CD4-positive, alpha-beta T cell (primary cell): ENCODE measurements at regions of chr4 and their contacts with region 1.

Region 1: GRCh38 chr4:129377131-129377845 is 281.3 kb downstream of the C4orf33 start:
- DNase-seq: no peak
- ATAC-seq: no peak
- H3K4me3 ChIP-seq: no peak overlapping the region
- H3K4me3 Mint-ChIP-seq: no peak overlapping the region
- H3K27ac ChIP-seq: no peak overlapping the region
- H3K27ac Mint-ChIP-seq: no peak overlapping the region
- H3K4me1 ChIP-seq: no peaks in the 10 kb centered on the region
- H3K4me1 Mint-ChIP-seq: no peaks in the 10 kb centered on the region
- H3K27me3 ChIP-seq: no peaks in the 10 kb centered on the region
- H3K27me3 Mint-ChIP-seq: peaks cover 5% of the 10 kb centered on the region
- CTCF ChIP-seq: no peak

Region 2: GRCh38 chr4:129342819-129343408 is 34.4 kb before region 1 on chr4:
- CTCF ChIA-PET with region 1: no interaction called
- POLR2A ChIA-PET with region 1: no interaction called
- intact Hi-C with region 1: loop called in 1 of 2 experiments (anchors 1 kb)
- DNase-seq: peak in 3 of 14 experiments; percentile 11 to 35 (median 27)
- ATAC-seq: no peak
- H3K4me3 ChIP-seq: no peak overlapping the region
- H3K4me3 Mint-ChIP-seq: no peak overlapping the region
- H3K27ac ChIP-seq: no peak overlapping the region
- H3K27ac Mint-ChIP-seq: no peak overlapping the region
- H3K4me1 ChIP-seq: no peaks in the 10 kb centered on the region
- H3K4me1 Mint-ChIP-seq: no peaks in the 10 kb centered on the region
- H3K27me3 ChIP-seq: no peaks in the 10 kb centered on the region
- H3K27me3 Mint-ChIP-seq: peaks cover 20% of the 10 kb centered on the region
- CTCF ChIP-seq: no peak

Region 3: GRCh38 chr4:129788486-129788885 is 411.2 kb after region 1 on chr4:
- CTCF ChIA-PET with region 1: no interaction called
- POLR2A ChIA-PET with region 1: no interaction called
- intact Hi-C with region 1: no loop called
- DNase-seq: no peak
- ATAC-seq: no peak
- H3K4me3 ChIP-seq: no peak overlapping the region
- H3K4me3 Mint-ChIP-seq: no peak overlapping the region
- H3K27ac ChIP-seq: no peak overlapping the region
- H3K27ac Mint-ChIP-seq: no peak overlapping the region
- H3K4me1 ChIP-seq: no peaks in the 10 kb centered on the region
- H3K4me1 Mint-ChIP-seq: no peaks in the 10 kb centered on the region
- H3K27me3 ChIP-seq: no peaks in the 10 kb centered on the region
- H3K27me3 Mint-ChIP-seq: no peaks in the 10 kb centered on the region
- CTCF ChIP-seq: no peak